ENCODE measurements at regions of chr1 and their contacts with region 1.

Region 1: DNA sequence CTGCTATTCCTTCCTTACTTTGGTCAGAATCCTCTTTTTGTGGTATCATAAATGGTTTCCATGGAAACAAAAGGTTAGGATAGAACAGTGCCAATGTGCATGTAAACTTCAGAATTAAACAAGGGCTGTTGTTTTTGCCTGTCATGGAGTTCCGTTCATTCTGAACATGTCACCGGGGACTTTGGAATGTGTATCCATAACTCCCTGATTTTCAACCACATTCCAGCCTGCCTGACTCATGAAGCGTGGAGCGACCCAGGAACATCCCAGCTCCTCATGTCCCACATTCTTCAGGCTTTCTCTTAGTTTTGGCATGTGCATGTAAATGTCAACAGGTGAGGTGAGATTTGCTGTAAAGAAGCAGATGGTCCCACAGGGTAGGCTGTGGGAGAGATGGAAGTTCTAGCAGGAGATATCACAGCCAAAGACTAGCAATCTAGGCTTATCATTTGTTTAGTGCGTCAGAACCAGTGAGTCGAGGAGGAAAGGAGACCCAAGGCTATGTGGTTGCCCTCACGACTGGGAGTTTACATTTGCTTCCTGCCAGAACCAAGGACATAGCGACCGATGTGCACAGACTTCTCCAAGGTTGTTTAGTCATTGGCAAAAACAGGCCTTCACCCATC is 23.0 kb upstream of the DNAJC11 start:
- DNase-seq: no peak
- H3K4me3 ChIP-seq: no peak overlapping the region
- H3K27ac ChIP-seq: peak overlapping the region in 1 of 4 donors; percentile 52
- H3K4me1 ChIP-seq: peaks cover 0 to 14% (median 7%) of the 10 kb centered on the region in 4 donors
- H3K27me3 ChIP-seq: no peaks in the 10 kb centered on the region
- CTCF ChIP-seq: no peak
- EP300 ChIP-seq: no peak
- POLR2A ChIP-seq: no peak

Region 2: GRCh38 chr1:6801966-6802365 is 77.3 kb after region 1 on chr1:
- intact Hi-C with region 1: no loop called
- DNase-seq: no peak
- H3K4me3 ChIP-seq: no peak overlapping the region
- H3K27ac ChIP-seq: peak overlapping the region in 2 of 4 donors; percentile 46 to 55
- H3K4me1 ChIP-seq: peaks cover 0 to 65% (median 47%) of the 10 kb centered on the region in 4 donors
- H3K27me3 ChIP-seq: no peaks in the 10 kb centered on the region
- CTCF ChIP-seq: no peak
- EP300 ChIP-seq: no peak
- POLR2A ChIP-seq: no peak

Region 3: DNA sequence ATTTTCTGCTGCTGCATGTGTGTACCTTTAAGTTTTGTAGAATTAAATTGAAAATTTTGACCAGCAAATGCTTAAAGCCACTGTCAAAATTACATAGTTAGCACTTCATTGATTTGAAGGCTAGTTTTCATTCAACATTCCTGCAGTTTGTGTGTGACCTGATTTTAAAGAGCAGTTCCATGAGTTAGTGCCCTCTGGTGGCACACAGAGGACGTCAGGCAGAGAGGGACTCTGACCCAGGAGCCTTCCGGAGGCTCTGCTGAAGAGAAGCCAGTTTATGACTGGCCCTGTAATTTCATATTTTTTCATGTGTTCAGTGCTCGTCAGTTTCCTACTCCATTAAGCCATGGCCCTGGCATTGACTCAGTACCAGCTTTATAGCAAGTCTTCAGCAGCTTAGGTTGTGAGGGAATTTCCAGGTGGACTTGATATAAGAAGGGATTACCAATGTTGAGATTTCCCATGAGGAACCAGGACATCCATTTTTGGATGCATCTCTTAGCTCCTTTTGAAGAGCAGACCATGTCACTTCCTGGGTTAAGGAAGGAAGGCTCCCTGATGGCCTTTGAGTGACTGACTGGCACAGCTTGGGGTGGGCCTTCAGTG is 165.3 kb after region 1 on chr1:
- intact Hi-C with region 1: loop called (anchors 5 kb)
- DNase-seq: no peak
- H3K4me3 ChIP-seq: no peak overlapping the region
- H3K27ac ChIP-seq: no peak overlapping the region
- H3K4me1 ChIP-seq: no peaks in the 10 kb centered on the region
- H3K27me3 ChIP-seq: no peaks in the 10 kb centered on the region
- CTCF ChIP-seq: peak; percentile 26 to 70 (median 58)
- EP300 ChIP-seq: no peak
- POLR2A ChIP-seq: no peak

Region 4: GRCh38 chr1:7070389-7071029 is 345.9 kb after region 1 on chr1:
- intact Hi-C with region 1: loop called (anchors 2 kb)
- DNase-seq: peak; percentile 83
- H3K4me3 ChIP-seq: peak overlapping the region in 3 of 4 donors; percentile 31 to 37 (median 33)
- H3K27ac ChIP-seq: no peak overlapping the region
- H3K4me1 ChIP-seq: peaks cover 0 to 6% (median 6%) of the 10 kb centered on the region in 4 donors
- H3K27me3 ChIP-seq: peaks cover 0 to 6% (median 0%) of the 10 kb centered on the region in 3 donors
- CTCF ChIP-seq: peak in 3 of 4 experiments; percentile 59 to 82 (median 72)
- EP300 ChIP-seq: no peak
- POLR2A ChIP-seq: no peak

Region 5: GRCh38 chr1:7218210-7218832 is 493.7 kb after region 1 on chr1:
- intact Hi-C with region 1: loop called (anchors 2 kb)
- DNase-seq: no peak
- H3K4me3 ChIP-seq: no peak overlapping the region
- H3K27ac ChIP-seq: no peak overlapping the region
- H3K4me1 ChIP-seq: peaks cover 0 to 13% (median 8%) of the 10 kb centered on the region in 4 donors
- H3K27me3 ChIP-seq: no peaks in the 10 kb centered on the region
- CTCF ChIP-seq: peak in 3 of 4 experiments; percentile 57 to 73 (median 70)
- EP300 ChIP-seq: no peak
- POLR2A ChIP-seq: no peak

Measured in sigmoid colon (tissue), 7 donors.